Posterior vena cava (tissue), 2 donors: ENCODE measurements at regions of chr11 and their contacts with region 1.

Region 1: GRCh38 chr11:19679952-19680828 is 32.4 kb upstream of the NAV2 start:
- DNase-seq: peak; percentile 98

Region 2: DNA sequence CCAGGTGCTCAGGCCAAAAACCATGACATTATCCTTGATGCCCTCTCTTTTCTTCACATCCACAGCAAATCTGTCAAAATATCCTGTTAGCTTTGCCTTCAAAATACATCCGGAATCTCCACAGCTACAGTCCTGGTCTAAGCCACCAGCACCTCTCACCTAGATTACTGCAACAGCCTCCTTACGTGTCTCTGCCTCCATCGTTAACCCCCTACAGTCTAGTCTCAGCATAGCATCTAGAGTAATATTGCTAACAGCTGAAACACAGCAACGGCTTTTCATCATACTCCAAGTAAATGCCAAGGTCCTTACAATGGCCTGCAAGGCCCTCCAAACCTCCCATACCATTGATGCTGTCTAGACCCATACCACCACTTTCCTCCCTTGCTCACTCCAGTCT is 1157.8 kb before region 1 on chr11:
- intact Hi-C with region 1: no loop called
- DNase-seq: no peak

Region 3: DNA sequence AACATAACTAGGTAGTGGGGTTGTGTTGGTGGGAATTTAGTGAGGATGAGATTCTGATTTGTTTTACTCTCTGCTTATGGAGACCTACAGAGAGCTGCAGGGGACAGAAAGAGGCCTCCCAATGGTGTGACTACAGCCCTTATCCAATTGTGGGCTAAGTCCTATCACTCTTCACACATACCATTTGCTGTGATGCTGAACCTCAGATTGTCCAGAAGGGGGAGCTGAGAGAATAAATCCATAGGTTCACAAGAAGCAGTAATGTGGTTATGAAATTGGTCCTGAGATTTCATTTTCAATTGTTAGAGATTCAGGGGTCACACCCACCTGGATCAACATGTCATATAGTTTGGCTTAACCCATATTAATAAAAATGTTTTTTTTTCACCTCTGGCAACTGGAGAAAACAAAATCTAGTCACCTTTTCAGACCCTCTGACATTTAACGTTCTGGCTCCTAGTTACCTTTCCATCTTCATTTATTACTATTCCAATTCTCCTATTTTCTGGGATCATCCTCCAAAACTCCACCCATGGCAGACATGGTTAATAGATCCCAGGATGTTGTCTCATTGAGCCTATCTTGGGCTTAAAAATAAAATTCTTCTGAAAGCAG is 835.3 kb before region 1 on chr11:
- intact Hi-C with region 1: no loop called
- DNase-seq: no peak

Region 4: DNA sequence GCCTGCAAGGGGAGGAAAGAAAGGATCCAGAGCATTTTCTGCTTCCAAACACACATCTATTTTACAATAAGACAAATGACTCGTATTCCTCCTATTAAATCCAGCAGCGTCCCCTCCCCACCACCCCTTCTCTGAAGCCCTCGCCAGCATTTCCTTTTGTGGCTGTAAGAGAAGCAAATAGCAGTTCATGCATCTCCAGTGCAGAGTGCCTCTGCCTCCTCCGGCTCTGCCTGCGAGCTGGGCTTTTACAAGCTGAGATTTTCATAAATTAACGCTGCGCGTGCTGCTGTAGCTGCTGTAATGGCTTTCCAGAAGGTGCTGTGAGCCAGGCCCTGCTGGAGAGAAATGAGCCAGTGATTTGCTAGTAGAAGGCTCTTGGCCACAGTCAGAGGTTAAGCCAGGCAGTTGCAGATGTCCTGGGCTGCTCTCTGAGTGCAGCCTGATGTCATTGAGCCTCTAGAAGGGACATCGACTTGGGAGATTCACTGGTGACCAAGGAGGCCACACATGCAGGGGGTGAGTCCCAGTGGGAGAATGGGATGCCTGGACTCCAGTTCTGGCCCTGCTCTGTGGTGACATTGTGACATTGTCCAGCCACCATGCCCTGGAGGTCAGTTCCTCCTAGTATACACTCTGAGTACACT is 102.1 kb before region 1 on chr11:
- intact Hi-C with region 1: loop called in 1 of 2 experiments (anchors 10 kb)
- DNase-seq: peak; percentile 85

Region 5: DNA sequence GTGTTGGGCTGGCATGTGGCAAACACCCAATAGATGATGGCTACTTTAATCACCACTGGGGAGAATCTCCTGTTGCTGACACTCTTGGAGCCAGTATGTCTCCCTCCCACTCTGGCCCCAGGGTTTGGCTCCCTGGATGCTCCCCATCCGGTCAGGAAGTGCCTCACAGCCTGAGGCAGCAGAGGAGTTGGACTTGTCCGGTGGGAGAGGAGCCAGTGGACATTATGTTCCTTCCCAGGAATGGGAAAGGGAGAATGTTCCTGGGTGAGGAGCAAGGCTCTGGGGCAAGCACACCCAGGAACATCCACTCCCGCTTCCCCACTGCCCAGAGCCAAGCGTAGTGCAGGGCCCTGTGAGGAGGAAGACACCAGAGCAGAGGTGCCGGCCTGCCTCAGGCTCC is 52.2 kb before region 1 on chr11:
- intact Hi-C with region 1: no loop called
- DNase-seq: peak; percentile 93

Region 6: GRCh38 chr11:19714387-19715363 is 34.5 kb after region 1 on chr11:
- intact Hi-C with region 1: loop called in 1 of 2 experiments (anchors 5 kb)
- DNase-seq: peak; percentile 86